Transverse colon (tissue), 4 donors: ENCODE measurements at regions of chr10 and their contacts with region 1.

Region 1: GRCh38 chr10:129551767-129552518 is 84.9 kb downstream of the MGMT start:
- DNase-seq: no peak
- H3K4me3 ChIP-seq: no peak overlapping the region
- H3K27ac ChIP-seq: no peak overlapping the region
- H3K4me1 ChIP-seq: no peaks in the 10 kb centered on the region
- H3K27me3 ChIP-seq: no peaks in the 10 kb centered on the region
- CTCF ChIP-seq: no peak
- EP300 ChIP-seq: no peak
- POLR2A ChIP-seq: no peak

Region 2: GRCh38 chr10:129580010-129580409 is 28.1 kb after region 1 on chr10:
- in situ Hi-C with region 1: no loop called
- intact Hi-C with region 1: loop called (anchors 1 kb)
- DNase-seq: no peak
- H3K4me3 ChIP-seq: no peak overlapping the region
- H3K27ac ChIP-seq: no peak overlapping the region
- H3K4me1 ChIP-seq: no peaks in the 10 kb centered on the region
- H3K27me3 ChIP-seq: no peaks in the 10 kb centered on the region
- CTCF ChIP-seq: no peak
- EP300 ChIP-seq: no peak
- POLR2A ChIP-seq: no peak

Region 3: DNA sequence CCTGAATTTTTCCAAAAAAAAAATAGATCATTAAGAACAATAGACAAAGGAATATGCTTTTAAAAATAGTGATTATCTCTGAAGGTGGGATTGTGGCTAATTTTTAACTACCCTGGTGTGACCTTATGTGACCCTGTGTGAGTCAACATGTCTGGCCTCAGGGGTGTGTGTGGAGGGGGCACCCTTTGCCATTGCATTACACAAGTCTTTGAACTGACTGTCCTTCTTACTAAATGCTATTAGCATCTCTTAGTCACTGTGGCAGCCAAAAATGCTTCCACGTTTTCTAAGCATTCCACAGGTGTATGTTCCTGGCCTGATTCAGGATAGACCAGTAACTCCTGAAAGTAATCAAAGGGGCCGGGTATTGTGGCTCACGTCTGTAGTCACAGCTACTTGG is 90.5 kb after region 1 on chr10:
- in situ Hi-C with region 1: no loop called
- intact Hi-C with region 1: no loop called
- DNase-seq: no peak
- H3K4me3 ChIP-seq: no peak overlapping the region
- H3K27ac ChIP-seq: no peak overlapping the region
- H3K4me1 ChIP-seq: no peaks in the 10 kb centered on the region
- H3K27me3 ChIP-seq: no peaks in the 10 kb centered on the region
- CTCF ChIP-seq: no peak
- EP300 ChIP-seq: no peak
- POLR2A ChIP-seq: no peak

Region 4: DNA sequence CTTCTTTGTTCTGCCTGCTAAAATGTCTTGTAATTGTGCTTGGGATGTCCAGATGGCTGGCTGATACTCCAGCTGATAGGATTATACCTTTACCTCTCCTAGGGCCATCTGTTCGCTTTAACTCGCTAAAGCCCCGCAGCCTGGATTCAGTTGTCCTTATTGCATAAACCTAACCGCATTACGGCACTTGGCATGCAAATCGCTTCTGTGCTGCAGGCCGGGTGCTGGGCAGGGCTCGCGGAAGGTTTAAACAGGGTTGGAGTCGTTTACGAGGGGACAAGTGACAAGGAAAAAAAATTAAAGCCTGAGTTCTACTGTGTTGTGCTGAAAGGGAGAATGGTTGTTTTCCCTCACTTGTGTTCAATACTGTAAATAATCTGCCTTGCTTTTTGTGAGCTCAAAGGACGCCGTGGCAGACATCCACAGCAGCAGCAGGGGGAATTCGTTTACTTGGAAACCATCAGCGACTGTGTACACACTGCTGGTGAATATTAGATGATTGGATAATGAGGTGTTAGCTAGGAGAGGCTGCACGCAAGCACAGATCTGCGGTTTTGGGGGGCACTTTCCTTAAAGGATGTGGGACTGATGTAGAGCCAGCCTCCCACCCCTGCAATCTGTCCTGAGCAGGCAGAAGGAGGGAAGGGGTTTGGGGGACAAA is 319.1 kb after region 1 on chr10:
- in situ Hi-C with region 1: no loop called
- intact Hi-C with region 1: no loop called
- DNase-seq: no peak
- H3K4me3 ChIP-seq: no peak overlapping the region
- H3K27ac ChIP-seq: no peak overlapping the region
- H3K4me1 ChIP-seq: no peaks in the 10 kb centered on the region
- H3K27me3 ChIP-seq: no peaks in the 10 kb centered on the region
- CTCF ChIP-seq: no peak
- EP300 ChIP-seq: no peak
- POLR2A ChIP-seq: no peak